Lower leg skin (tissue), 4 donors: ENCODE measurements at regions of chr3 and their contacts with region 1.

Region 1: GRCh38 chr3:64484289-64484992 is 203.4 kb downstream of the ADAMTS9 start:
- DNase-seq: peak; percentile 59 to 95
- H3K4me3 ChIP-seq: no peak overlapping the region
- CTCF ChIP-seq: peak in 1 of 3 donors; percentile 49
- POLR2A ChIP-seq: no peak

Region 2: DNA sequence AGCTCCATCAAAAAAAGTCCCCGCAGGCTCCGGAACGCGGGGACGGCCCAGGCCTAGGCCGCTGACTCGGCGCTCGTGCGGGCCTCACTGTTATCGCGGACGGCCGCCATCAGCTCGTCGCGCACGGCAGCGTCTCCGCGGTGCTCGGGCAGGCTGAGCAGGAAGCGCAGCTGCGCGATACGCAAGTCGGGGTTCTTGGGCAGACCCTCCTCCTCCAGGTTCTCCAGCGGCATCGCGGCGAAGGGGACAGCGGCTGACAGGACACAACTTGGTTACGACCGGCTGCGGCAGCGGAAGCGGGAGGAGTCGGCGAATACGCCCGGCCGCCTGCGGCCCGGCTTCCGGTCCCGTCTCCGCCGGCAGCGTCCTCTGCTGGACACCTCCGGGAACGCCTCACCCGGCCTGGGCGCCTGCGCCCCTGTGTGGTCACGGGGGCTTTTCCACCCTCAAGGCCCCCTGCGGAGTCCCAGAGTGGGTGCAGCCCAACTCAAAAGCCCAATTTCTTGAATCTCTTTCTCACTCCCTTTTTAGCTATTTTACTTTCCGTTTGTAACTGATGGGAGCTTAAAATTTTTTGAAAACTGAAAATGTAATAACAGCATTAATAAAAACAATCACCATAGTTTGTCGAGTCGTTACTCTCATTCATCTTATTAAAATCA is 461.1 kb before region 1 on chr3 and contains the start of gene PSMD6:
- intact Hi-C with region 1: loop called (anchors 10 kb)
- DNase-seq: peak; percentile 79 to 96
- H3K4me3 ChIP-seq: peak within 1 kb of the TSS; percentile 92
- CTCF ChIP-seq: peak in 2 of 3 donors; percentile 45 to 98
- POLR2A ChIP-seq: no peak
- total RNA-seq, gene PSMD6: 61.6 to 81.2 (median 67.1) TPM

Region 3: GRCh38 chr3:64405211-64405835 is 79.1 kb before region 1 on chr3:
- intact Hi-C with region 1: loop called (anchors 10 kb)
- DNase-seq: no peak
- H3K4me3 ChIP-seq: no peak overlapping the region
- CTCF ChIP-seq: no peak
- POLR2A ChIP-seq: no peak

Region 4: GRCh38 chr3:64792445-64792844 is 308.0 kb after region 1 on chr3:
- intact Hi-C with region 1: no loop called
- DNase-seq: no peak
- H3K4me3 ChIP-seq: no peak overlapping the region
- CTCF ChIP-seq: no peak
- POLR2A ChIP-seq: no peak